ENCODE measurements at regions of chr7 and their contacts with region 1.

Region 1: DNA sequence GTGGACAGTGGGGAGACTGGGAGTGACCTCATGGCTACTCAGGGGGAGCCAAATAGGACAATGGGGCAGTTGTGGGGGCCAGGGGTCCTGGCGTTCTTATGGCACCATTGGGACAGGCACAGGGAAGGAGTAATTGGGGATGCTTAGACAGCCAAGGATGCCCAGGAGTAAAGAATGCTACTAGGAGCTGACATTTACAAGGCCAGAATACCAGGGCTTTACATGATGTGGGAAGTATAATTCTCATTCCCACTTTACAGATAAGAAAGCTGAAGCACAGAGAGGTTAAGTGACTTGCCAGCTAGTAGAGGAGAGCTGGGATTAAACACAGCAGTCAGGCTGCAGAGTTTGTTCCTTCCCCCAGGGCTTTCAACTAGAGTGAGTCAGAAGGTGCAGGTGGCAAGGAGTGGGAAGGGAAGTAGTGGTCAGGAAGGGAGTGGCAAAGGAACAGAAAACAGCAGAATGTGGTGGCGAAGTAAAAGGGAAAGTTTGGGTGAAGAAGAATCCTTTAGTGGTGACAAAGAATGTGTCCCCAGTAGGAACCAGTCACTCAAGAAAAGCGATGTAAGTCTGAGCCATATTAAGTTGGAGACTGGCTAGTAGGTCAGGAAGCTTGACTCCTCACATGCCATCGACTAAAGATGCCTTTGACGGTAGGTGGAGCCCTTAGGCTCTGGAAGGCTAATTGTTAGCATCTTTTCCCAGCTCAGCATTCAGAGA is 32.8 kb downstream of the CPVL start:
- H3K4me3 ChIP-seq: no peak overlapping the region
- H3K27ac ChIP-seq: no peak overlapping the region
- H3K4me1 ChIP-seq: peaks cover 4% of the 10 kb centered on the region
- CTCF ChIP-seq: peak; percentile 43; the same call in 1 of the 2 replicates

Region 2: GRCh38 chr7:29071203-29071874 is 42.2 kb before region 1 on chr7:
- CTCF ChIA-PET with region 1: no interaction called
- POLR2A ChIA-PET with region 1: no interaction called
- H3K4me3 ChIP-seq: no peak overlapping the region
- H3K27ac ChIP-seq: no peak overlapping the region
- H3K4me1 ChIP-seq: peaks cover 4% of the 10 kb centered on the region; the same call in 1 of the 2 replicates
- CTCF ChIP-seq: no peak

Region 3: GRCh38 chr7:29408841-29409243 is 295.3 kb after region 1 on chr7:
- CTCF ChIA-PET with region 1: interaction called, 22 read pairs
- POLR2A ChIA-PET with region 1: no interaction called
- H3K4me3 ChIP-seq: no peak overlapping the region
- H3K27ac ChIP-seq: no peak overlapping the region
- H3K4me1 ChIP-seq: no peaks in the 10 kb centered on the region
- CTCF ChIP-seq: peak; percentile 29; the same call in 1 of the 2 replicates

Region 4: DNA sequence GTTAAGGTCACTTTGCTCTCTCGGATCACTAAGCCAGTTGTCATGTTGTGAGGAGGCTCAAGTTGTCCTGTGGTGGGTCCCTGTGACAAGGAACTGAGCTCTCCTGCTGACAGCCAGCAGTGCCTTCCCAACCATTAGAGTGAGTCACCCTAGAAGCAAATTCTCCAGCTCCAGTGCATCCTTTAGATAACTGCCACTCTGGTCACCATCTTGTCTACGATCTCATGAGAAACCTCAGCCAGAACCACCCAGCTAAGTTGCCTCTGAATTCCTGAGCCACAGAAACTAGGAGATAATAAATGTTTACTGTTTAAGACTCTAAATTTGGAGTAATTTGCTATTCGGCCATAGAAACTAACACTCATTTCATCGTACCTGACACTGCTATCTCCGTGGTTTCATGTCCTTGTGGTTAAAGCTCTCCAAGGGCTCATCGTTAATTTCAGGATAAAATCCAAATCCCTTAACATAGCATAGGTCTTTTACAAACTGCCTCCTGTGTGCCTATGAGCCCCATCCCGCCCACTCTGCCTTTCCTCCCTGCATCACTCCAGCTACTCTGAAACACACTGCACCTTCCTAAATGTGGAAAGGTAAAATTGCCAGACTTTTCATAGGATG is 636.3 kb after region 1 on chr7:
- CTCF ChIA-PET with region 1: no interaction called
- POLR2A ChIA-PET with region 1: no interaction called
- H3K4me3 ChIP-seq: no peak overlapping the region
- H3K27ac ChIP-seq: no peak overlapping the region
- H3K4me1 ChIP-seq: no peaks in the 10 kb centered on the region
- CTCF ChIP-seq: no peak

Measured in HEK293 (cell line).